Caco-2 (cell line): ENCODE measurements at regions of chr5 and their contacts with region 1.

Region 1: GRCh38 chr5:72319976-72320752 is at the starts of genes MRPS27 and PTCD2:
- DNase-seq: peak; percentile 97 to 99
- H3K4me3 ChIP-seq: peak within 1 kb of the TSS; percentile 78
- H3K4me3 Mint-ChIP-seq: peak within 1 kb of the TSS; percentile 99
- H3K27ac Mint-ChIP-seq: peak within 1 kb of the TSS; percentile 97
- H3K4me1 ChIP-seq: peaks cover 4% of the 10 kb centered on the region; the same call in 1 of the 2 replicates
- H3K4me1 Mint-ChIP-seq: peaks cover 17% of the 10 kb centered on the region
- H3K27me3 ChIP-seq: no peaks in the 10 kb centered on the region
- H3K27me3 Mint-ChIP-seq: no peaks in the 10 kb centered on the region
- CTCF ChIP-seq: peak; percentile 29 to 45
- total RNA-seq, gene MRPS27: 71.1 and 83.8 TPM in 2 replicates
- total RNA-seq, gene PTCD2: 11.6 and 12.5 TPM in 2 replicates

Region 2: GRCh38 chr5:72307968-72308852 is 12.0 kb before region 1 on chr5:
- CTCF ChIA-PET with region 1: interaction called, 15 read pairs
- POLR2A ChIA-PET with region 1: interaction called, 19 read pairs
- intact Hi-C with region 1: loop called (anchors 1 kb)
- DNase-seq: peak; percentile 97 to 98
- H3K4me3 ChIP-seq: peak overlapping the region; percentile 57
- H3K4me3 Mint-ChIP-seq: peak overlapping the region; percentile 84
- H3K27ac Mint-ChIP-seq: peak overlapping the region; percentile 84
- H3K4me1 ChIP-seq: peaks cover 19% of the 10 kb centered on the region
- H3K4me1 Mint-ChIP-seq: peaks cover 18% of the 10 kb centered on the region
- H3K27me3 ChIP-seq: no peaks in the 10 kb centered on the region
- H3K27me3 Mint-ChIP-seq: no peaks in the 10 kb centered on the region
- CTCF ChIP-seq: peak; percentile 76 to 86